Activated CD4-positive, alpha-beta T cell treated with anti-CD3 and anti-CD28 coated beads, Interleukin-2, amount 10 ng/mL, durations not matched to agents 24 days and 14 days (primary cell): ENCODE measurements at regions of chr5 and their contacts with region 1.

Region 1: DNA sequence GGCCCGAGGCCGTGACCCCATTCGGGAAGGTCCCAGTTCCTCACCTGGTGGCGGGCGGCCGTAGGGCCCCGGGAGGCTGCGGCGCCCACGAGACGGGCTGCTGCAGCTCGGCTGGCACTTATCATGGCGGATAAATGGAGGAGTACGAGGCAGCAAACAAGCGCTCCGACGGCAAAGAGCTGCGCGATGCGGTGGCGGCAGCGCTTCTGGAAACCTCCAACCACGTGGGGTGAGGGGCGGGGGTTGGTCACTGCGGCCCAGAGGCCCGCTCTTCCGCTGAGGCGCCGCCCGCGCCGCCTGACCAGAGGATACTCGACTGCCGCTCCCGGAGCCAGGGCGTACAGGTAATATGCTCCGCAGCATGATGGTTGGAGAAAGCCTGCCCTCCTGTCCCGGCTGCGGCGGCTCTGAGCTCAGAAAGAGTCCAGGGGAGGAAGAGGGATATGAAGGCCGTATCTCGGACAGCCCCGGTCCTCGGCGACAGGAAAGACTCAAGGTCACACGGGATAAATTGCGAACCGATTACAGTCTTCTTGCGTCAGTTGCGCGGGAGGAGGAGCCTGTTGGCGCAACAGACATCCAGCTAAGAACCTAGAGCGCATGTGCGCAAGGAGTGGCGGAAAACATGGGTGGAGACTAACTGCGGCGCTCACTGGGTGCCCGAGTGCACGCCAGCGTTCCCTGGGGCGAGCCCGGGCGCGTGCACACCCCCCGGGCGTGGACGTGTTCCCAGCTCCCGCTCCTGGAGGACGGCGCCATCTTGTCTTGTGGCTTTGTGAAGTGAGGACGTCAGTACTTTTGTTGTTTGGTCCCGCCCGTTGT is at the start of gene HSPA9:
- DNase-seq: peak; percentile 99
- H3K4me3 Mint-ChIP-seq: peak within 1 kb of the TSS; percentile 98
- H3K27ac Mint-ChIP-seq: peak within 1 kb of the TSS; percentile 100
- H3K4me1 Mint-ChIP-seq: peaks cover 30% of the 10 kb centered on the region
- H3K27me3 Mint-ChIP-seq: no peaks in the 10 kb centered on the region
- total RNA-seq, gene HSPA9: 415 and 430 TPM in 2 replicates

Region 2: GRCh38 chr5:138352071-138352721 is 223.2 kb before region 1 on chr5 and contains the start of gene KDM3B:
- intact Hi-C with region 1: loop called (anchors 2 kb)
- DNase-seq: peak; percentile 99
- H3K4me3 Mint-ChIP-seq: peak within 1 kb of the TSS; percentile 95
- H3K27ac Mint-ChIP-seq: peak within 1 kb of the TSS; percentile 95
- H3K4me1 Mint-ChIP-seq: peaks cover 37% of the 10 kb centered on the region
- H3K27me3 Mint-ChIP-seq: no peaks in the 10 kb centered on the region
- total RNA-seq, gene KDM3B: 48.7 and 52.7 TPM in 2 replicates

Region 3: DNA sequence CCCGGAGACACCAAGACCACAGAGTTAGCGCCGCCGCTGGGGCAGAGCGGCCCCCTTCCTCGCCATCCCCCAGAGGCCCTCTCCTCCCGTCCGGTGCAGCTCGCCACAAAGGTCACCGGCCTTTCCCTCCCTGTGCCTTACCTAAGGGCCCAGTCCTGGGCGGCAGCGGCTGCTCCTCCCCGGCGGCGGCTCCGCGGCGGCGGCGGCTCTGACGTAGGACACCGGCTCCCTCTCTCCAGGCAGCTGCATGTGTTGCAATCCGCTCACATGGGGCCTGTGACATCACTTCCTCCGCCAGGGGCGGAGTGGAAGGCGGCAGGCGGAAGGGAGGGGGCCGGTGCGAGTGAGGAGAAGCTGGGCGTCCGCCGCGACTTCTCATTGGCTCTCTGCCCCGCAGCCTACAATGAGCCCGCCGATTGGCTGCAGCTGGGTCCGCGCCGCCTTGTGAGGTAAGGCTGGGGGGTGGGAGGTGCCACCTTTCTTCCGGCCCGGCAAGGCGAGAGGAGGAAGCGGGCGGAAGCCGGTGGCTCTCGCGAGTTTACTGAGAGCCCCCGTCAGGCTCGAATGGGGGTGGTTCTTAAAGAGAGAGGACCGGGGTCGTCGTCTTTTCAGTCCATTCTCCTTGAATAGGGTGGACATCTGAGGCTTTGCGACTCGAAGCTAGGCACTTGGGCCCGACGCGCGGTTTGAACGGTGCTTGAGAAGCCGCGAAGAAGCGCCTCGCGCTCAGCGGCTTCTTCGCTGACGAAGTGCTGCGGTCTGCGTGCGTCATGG is 32.3 kb before region 1 on chr5 and contains the start of gene ETF1:
- intact Hi-C with region 1: loop called (anchors 1 kb)
- DNase-seq: peak; percentile 100
- H3K4me3 Mint-ChIP-seq: peak within 1 kb of the TSS; percentile 99
- H3K27ac Mint-ChIP-seq: peak within 1 kb of the TSS; percentile 100
- H3K4me1 Mint-ChIP-seq: peaks cover 49% of the 10 kb centered on the region
- H3K27me3 Mint-ChIP-seq: no peaks in the 10 kb centered on the region
- total RNA-seq, gene ETF1: 200 and 205 TPM in 2 replicates

Region 4: GRCh38 chr5:138654281-138654867 is 79.0 kb after region 1 on chr5:
- intact Hi-C with region 1: loop called (anchors 1 kb)
- DNase-seq: peak; percentile 87
- H3K4me3 Mint-ChIP-seq: peak overlapping the region; percentile 42
- H3K27ac Mint-ChIP-seq: peak overlapping the region; percentile 83
- H3K4me1 Mint-ChIP-seq: peaks cover 14% of the 10 kb centered on the region
- H3K27me3 Mint-ChIP-seq: peaks cover 86% of the 10 kb centered on the region

Region 5: DNA sequence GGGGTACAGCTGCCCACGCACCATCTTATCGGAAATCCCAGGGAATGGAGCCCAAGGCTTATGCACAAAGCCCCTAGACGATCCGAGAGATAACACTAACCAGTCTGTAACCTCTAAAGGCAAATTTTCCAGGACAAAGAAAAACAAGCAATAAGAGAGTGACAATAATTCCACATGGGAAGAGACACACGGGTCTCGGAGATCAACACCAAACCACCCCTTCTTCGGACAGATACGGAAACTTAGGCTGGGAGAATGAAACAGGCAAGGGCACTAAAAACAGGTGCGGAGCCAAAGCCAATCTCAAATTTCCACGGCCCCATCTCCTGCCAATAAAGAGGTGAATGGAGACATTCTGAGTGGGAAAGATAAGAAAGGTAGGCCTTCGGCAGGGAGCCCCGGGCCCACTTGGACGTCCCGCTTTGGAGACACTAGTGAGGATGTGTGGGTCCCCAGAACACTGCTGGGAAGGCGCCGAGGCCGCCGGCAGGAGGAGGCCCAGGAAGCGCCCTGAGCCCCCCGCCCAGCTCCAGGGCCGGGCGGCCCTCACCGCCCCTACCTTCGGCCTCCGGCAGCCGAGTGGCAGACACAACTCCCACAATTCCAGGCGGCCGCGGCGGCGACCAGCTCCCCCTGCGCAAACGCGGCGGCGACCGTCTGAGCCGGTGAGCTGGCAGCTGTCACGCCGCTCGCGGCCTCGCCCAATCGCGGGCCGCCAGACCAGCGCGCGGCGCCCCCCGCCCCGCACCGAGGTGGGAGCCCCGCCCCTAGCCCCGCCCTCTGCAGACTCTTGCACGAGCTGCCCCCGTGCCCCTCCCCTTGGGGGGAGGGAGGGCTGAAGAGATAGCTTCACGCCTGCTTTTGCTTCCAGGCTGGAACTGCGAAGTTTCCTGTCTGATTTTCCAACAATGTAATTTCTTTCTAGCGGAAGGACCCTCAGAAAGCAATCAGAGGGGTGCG is 622.6 kb after region 1 on chr5 and contains the start of gene SIL1:
- intact Hi-C with region 1: loop called (anchors 1 kb)
- DNase-seq: peak; percentile 98
- H3K4me3 Mint-ChIP-seq: peak within 1 kb of the TSS; percentile 93
- H3K27ac Mint-ChIP-seq: peak within 1 kb of the TSS; percentile 89
- H3K4me1 Mint-ChIP-seq: peaks cover 21% of the 10 kb centered on the region
- H3K27me3 Mint-ChIP-seq: no peaks in the 10 kb centered on the region
- total RNA-seq, gene SIL1: 31.1 and 40.5 TPM in 2 replicates

Region 6: DNA sequence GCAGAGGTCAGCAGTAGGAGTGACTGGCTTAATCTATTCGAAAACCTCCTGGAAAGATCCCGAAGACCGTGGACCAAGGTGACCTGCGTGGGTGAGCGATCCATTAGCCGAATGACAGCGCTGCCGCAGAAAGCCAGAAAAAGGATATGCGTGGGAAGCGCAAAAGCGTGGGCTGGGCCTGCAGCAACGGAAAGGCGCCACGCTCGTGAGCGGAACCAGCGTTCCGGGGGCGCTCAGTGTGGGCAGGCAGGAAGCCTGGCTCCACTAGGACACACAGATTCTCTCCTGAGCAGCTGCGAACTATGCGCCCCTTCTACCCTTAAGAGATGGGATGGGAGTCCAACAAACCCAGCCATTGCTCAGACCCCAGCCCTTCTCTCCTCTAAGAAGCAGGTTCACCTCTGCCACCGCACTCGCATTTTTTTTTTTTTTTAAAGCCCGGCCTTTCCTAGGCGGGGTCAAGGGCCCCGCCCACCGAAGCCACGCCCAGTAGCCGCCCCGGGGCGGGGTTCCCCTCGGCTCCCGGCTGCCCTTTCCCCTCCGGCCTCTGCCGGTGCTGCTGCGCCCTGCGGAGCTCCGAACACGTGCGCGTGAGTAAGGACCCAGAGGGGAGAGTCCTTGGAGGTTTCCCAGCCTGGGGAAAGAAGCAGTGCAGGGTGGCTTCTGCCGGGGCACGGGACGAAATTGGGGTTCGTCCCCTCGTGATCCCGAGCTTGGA is 698.3 kb after region 1 on chr5:
- intact Hi-C with region 1: loop called (anchors 1 kb)
- DNase-seq: peak; percentile 97
- H3K4me3 Mint-ChIP-seq: peak overlapping the region; percentile 97
- H3K27ac Mint-ChIP-seq: peak overlapping the region; percentile 94
- H3K4me1 Mint-ChIP-seq: peaks cover 42% of the 10 kb centered on the region
- H3K27me3 Mint-ChIP-seq: peaks cover 2% of the 10 kb centered on the region

Region 7: DNA sequence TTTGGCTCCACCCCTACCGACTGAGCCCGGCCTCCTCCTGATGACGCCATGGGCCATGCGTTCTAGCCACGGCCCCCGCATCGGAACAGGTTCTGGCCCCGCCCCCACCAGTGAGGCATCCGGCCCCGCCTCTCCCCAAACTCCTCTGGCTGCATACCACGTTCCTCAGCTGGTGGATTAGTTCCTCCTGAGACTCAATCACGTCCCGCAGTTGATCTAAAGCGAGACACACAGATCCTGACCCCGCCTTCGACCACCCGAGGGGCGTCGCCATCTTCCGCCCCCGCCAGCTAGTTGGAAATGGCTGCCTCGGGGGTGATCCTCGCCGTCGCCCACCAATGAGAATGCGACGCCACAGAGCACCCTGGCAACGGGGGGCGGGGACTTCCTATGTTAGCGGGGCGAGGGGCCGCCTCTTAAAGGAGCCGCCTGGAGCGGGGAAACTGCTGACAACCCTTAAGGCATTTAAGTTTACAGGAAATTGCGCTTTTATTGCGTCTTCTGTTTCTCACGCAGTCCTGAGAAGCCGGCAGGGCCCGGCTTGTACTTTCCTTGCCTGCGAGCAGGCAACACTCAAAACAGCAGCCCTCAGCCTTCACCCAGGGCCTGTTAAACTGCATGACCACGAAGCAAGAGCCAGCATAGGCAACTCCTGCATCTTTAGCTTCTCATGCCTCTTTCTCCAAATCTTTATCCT is 828.5 kb after region 1 on chr5 and contains the start of gene SPATA24:
- intact Hi-C with region 1: loop called (anchors 5 kb)
- DNase-seq: peak; percentile 99
- H3K4me3 Mint-ChIP-seq: peak within 1 kb of the TSS; percentile 87
- H3K27ac Mint-ChIP-seq: peak within 1 kb of the TSS; percentile 99
- H3K4me1 Mint-ChIP-seq: peaks cover 37% of the 10 kb centered on the region
- H3K27me3 Mint-ChIP-seq: no peaks in the 10 kb centered on the region
- total RNA-seq, gene SPATA24: 4.2 TPM in 2 replicates